Aorta (tissue), 5 donors: ENCODE measurements at regions of chr14 and their contacts with region 1.

Region 1: GRCh38 chr14:101964297-101965144 is at the start of gene DYNC1H1:
- DNase-seq: peak; percentile 96 to 99
- ATAC-seq: peak; percentile 94
- H3K4me3 ChIP-seq: peak within 1 kb of the TSS; percentile 87 to 94
- H3K27ac ChIP-seq: peak within 1 kb of the TSS; percentile 17 to 65
- H3K4me1 ChIP-seq: no peaks in the 10 kb centered on the region
- H3K27me3 ChIP-seq: no peaks in the 10 kb centered on the region
- total RNA-seq, gene DYNC1H1: 451 to 481 TPM

Region 2: GRCh38 chr14:101980251-101981099 is 16.0 kb after region 1 on chr14:
- intact Hi-C with region 1: loop called in 1 of 2 experiments (anchors 2 kb)
- DNase-seq: peak in 1 of 2 donors; percentile 70
- ATAC-seq: peak; percentile 74
- H3K4me3 ChIP-seq: no peak overlapping the region
- H3K27ac ChIP-seq: peak overlapping the region; percentile 77 to 86
- H3K4me1 ChIP-seq: peaks cover 0 to 2% of the 10 kb centered on the region in 2 donors
- H3K27me3 ChIP-seq: no peaks in the 10 kb centered on the region

Region 3: GRCh38 chr14:102086972-102087761 is 122.6 kb after region 1 on chr14 and contains the start of gene HSP90AA1:
- intact Hi-C with region 1: loop called (anchors 2 to 5 kb)
- DNase-seq: peak; percentile 96 to 99
- ATAC-seq: peak; percentile 95
- H3K4me3 ChIP-seq: peak within 1 kb of the TSS; percentile 99
- H3K27ac ChIP-seq: peak within 1 kb of the TSS; percentile 87 to 100
- H3K4me1 ChIP-seq: peaks cover 0 to 2% of the 10 kb centered on the region in 2 donors
- H3K27me3 ChIP-seq: peaks cover 0 to 2% of the 10 kb centered on the region in 2 donors
- total RNA-seq, gene HSP90AA1: 254 to 379 TPM